ENCODE measurements at regions of chr11 and their contacts with region 1.

Region 1: DNA sequence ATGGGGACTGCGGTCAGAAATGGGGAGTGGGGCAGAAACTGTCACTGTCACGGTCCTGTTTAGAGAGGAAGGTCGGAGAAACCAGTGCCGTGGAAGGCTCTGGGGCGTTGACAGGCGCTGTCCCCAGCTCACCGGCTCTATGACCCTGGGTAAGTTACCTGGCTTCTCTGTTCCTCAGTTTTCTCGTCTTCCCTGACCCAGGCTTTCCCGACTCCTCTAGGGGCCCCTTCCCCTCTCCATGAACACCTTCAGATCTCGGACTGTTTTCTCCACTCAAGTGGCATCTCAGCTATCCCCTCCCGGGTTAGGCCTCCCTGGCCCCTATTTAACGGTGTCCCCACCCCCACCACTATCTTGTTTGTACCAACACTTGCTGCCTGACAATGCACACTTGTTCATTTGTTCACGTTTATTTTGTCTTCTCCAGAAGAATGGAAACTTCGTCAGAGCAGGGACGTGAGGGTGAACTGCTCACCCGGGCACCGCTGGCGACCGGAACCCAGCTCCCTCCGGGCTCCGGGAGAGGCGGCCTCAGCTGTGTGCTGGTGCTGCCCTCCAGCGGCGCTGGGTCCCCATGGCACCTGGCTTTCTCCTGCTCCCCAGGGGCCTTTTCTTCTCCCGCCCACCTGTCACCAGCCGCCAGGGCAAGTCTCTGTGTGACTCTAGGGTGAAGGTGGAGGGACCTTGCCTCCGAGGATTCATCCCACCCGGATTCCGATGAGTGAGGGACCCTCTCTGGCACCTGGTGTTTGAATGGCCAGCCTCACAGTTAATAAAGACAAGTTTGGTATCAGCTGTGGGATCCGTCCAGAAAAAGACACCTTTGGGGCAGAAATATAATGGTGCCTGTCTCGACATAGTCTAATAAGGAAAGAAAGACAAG is 33.1 kb upstream of the SLC35C1 start:
- DNase-seq: peak; percentile 92
- H3K4me3 Mint-ChIP-seq: peak overlapping the region; percentile 86
- H3K27ac Mint-ChIP-seq: peak overlapping the region; percentile 35
- H3K4me1 Mint-ChIP-seq: peaks cover 24% of the 10 kb centered on the region
- H3K27me3 Mint-ChIP-seq: no peaks in the 10 kb centered on the region

Region 2: GRCh38 chr11:45354976-45355705 is 416.7 kb before region 1 on chr11:
- CTCF ChIA-PET with region 1: interaction called, 9 read pairs
- POLR2A ChIA-PET with region 1: no interaction called
- intact Hi-C with region 1: loop called (anchors 5 kb)
- DNase-seq: peak; percentile 93
- H3K4me3 Mint-ChIP-seq: peak overlapping the region; percentile 76
- H3K27ac Mint-ChIP-seq: peak overlapping the region; percentile 47
- H3K4me1 Mint-ChIP-seq: peaks cover 17% of the 10 kb centered on the region
- H3K27me3 Mint-ChIP-seq: no peaks in the 10 kb centered on the region

Region 3: GRCh38 chr11:45662665-45663485 is 108.9 kb before region 1 on chr11:
- CTCF ChIA-PET with region 1: interaction called, 10 read pairs
- POLR2A ChIA-PET with region 1: no interaction called
- intact Hi-C with region 1: loop called (anchors 5 kb)
- DNase-seq: peak; percentile 37
- H3K4me3 Mint-ChIP-seq: no peak overlapping the region
- H3K27ac Mint-ChIP-seq: no peak overlapping the region
- H3K4me1 Mint-ChIP-seq: peaks cover 13% of the 10 kb centered on the region
- H3K27me3 Mint-ChIP-seq: peaks cover 57% of the 10 kb centered on the region

Region 4: GRCh38 chr11:45761659-45762058 is 10.1 kb before region 1 on chr11:
- CTCF ChIA-PET with region 1: interaction called, 11 read pairs
- POLR2A ChIA-PET with region 1: no interaction called
- intact Hi-C with region 1: no loop called
- DNase-seq: no peak
- H3K4me3 Mint-ChIP-seq: no peak overlapping the region
- H3K27ac Mint-ChIP-seq: no peak overlapping the region
- H3K4me1 Mint-ChIP-seq: no peaks in the 10 kb centered on the region
- H3K27me3 Mint-ChIP-seq: peaks cover 10% of the 10 kb centered on the region

Region 5: DNA sequence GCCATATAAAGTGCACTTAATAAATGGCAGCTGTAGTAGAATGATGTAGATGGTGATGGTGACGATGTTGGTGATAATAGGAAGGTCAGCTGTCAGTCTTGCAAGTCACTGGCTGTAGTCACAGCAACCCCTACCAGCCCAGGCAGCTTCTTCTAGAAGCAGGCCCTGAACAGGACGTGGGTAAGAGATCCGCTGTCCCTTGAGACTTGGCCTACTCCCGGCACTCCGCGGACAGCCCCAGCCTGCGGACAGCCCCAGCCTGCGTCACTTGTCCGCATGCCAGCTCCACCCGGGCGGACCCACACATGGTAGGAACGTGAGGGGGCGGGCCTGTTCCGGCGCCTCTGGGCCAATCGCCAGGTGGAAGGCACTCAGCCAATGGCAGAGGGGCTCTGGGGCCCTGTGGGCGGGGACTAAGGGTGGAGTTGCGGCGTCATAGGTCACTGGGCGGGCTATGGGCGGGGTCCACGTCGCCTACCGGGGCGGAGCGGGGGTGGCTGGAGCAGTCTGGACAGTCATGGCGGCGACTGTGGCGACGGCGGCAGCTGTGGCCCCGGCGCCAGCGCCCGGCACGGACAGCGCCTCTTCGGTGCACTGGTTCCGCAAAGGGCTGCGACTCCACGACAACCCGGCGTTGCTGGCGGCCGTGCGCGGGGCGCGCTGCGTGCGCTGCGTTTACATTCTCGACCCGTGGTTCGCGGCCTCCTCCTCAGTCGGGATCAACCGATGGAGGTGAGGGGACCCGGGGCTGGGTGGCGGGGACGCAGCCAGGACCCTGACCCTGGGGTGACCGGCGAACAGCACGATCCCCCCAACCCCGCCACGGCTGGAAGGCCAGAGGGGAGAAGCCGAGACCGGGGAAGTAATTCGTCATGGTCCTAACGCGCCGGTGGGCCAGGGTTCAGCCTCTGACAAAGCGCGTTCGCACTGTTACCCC is 75.4 kb after region 1 on chr11 and contains the start of gene CRY2:
- CTCF ChIA-PET with region 1: interaction called, 25 read pairs
- POLR2A ChIA-PET with region 1: no interaction called
- intact Hi-C with region 1: no loop called
- DNase-seq: peak; percentile 99
- H3K4me3 Mint-ChIP-seq: peak within 1 kb of the TSS; percentile 77
- H3K27ac Mint-ChIP-seq: peak within 1 kb of the TSS; percentile 78
- H3K4me1 Mint-ChIP-seq: peaks cover 55% of the 10 kb centered on the region
- H3K27me3 Mint-ChIP-seq: no peaks in the 10 kb centered on the region
- total RNA-seq, gene CRY2: 12.1 to 13.4 TPM

Region 6: GRCh38 chr11:45892856-45893255 is 121.0 kb after region 1 on chr11:
- CTCF ChIA-PET with region 1: no interaction called
- POLR2A ChIA-PET with region 1: no interaction called
- intact Hi-C with region 1: no loop called
- DNase-seq: no peak
- H3K4me3 Mint-ChIP-seq: no peak overlapping the region
- H3K27ac Mint-ChIP-seq: no peak overlapping the region
- H3K4me1 Mint-ChIP-seq: no peaks in the 10 kb centered on the region
- H3K27me3 Mint-ChIP-seq: peaks cover 18% of the 10 kb centered on the region